ENCODE measurements at regions of chr2 and their contacts with region 1.

Region 1: GRCh38 chr2:12965540-12966269 is 249.0 kb downstream of the TRIB2 start:
- DNase-seq: no peak

Region 2: GRCh38 chr2:12361506-12361905 is 604.2 kb before region 1 on chr2:
- CTCF ChIA-PET with region 1: interaction called, 10 read pairs
- POLR2A ChIA-PET with region 1: no interaction called
- DNase-seq: no peak

Region 3: DNA sequence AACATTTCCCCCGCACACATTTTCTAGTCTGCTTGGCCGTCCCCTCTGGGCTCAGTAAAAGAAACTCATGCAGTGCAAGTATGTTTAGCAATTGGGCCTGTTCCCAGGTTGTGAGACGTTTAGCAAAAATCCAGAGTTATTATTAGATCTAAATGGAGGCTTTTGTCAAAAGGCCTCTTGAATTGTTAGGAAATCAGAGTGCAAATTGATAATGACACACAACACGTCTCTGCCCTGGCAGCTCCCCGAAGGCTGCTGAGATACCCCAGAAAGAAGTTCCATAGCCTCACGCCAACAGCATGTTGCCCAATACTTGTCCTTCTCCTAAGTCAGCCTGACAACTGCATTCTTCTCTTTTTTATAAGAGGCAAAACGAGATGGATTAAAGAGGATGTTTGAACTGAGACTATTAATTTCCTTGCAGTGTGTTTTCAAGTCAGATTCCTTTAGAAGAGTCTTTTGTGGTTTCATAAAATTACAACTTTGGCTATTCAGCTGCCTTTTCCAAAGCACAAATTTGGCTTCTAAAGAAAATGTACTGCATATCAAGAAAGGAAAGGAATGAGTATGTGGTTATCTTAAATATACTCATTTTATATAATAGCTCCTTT is 46.8 kb before region 1 on chr2:
- CTCF ChIA-PET with region 1: no interaction called
- POLR2A ChIA-PET with region 1: no interaction called
- DNase-seq: no peak

Region 4: GRCh38 chr2:13046557-13047165 is 81.0 kb after region 1 on chr2:
- CTCF ChIA-PET with region 1: no interaction called
- POLR2A ChIA-PET with region 1: no interaction called
- DNase-seq: no peak